ENCODE measurements at regions of chr6 and their contacts with region 1.

Region 1: GRCh38 chr6:147559006-147559405 is 50.5 kb downstream of the SAMD5 start:
- H3K4me3 ChIP-seq: no peak overlapping the region
- H3K27ac ChIP-seq: no peak overlapping the region
- H3K4me1 ChIP-seq: no peaks in the 10 kb centered on the region
- CTCF ChIP-seq: no peak

Region 2: GRCh38 chr6:147570681-147571080 is 11.7 kb after region 1 on chr6:
- CTCF ChIA-PET with region 1: no interaction called
- POLR2A ChIA-PET with region 1: no interaction called
- H3K4me3 ChIP-seq: no peak overlapping the region
- H3K27ac ChIP-seq: no peak overlapping the region
- H3K4me1 ChIP-seq: no peaks in the 10 kb centered on the region
- CTCF ChIP-seq: no peak

Region 3: DNA sequence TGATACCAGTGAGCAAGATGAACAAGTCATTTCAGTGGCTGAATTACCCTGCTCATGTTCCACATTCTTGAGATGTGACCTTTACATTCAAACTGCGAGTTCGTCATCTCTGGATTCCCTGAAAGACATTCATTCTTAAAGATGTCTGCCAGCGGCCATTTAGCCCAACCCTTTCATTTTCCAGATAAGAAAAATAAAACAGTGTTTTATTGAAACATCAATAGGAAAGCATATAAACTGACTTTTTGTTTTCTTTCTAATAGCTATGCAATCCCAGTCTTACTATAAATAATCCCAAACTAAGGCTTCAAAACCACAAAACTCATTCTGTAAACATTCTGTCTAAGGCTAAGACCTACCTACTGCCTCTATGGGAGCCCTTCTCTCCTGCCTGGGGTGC is 83.5 kb after region 1 on chr6:
- CTCF ChIA-PET with region 1: no interaction called
- POLR2A ChIA-PET with region 1: interaction called, 11 read pairs
- H3K4me3 ChIP-seq: no peak overlapping the region
- H3K27ac ChIP-seq: no peak overlapping the region
- H3K4me1 ChIP-seq: 0 out of 2 replicates have a peak, but pooled peaks cover 2% of the 10 kb centered on the region
- CTCF ChIP-seq: no peak